ENCODE measurements at regions of chr7 and their contacts with region 1.

Region 1: DNA sequence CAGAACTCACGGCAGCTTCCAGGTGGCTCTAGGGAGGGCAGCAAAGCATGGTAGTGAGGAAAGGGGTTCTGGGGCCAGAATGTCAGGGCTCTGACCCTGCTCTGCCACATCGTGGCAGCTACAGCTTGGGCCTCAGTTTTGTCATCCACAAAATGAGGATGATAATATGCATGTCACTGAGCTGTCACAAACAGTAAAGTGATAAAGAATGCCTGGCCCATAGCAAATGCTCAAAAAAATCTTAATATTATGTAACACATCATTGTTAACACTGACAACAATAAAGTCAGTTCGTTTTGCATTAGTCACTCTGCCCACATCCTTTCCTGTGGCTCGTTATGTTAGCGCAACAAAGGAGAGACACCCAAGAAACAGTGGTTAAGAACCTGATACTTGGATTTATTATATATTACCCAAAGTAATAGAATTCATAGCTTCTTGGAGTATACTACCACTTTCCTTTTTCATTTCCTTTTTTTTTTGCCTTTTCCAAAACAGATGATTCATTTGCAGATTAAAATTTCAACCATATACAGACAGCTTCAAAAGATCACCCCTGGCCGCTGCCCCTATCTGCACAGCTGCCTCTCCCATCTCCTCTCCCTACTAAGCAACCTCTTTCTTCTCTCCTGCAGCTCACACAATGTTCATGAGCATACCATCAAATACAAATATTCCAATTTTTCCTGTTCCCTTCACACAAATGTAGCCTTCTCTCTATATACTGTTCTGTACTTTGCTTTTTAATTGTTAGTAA is 45.5 kb upstream of the DDC start:
- DNase-seq: peak; percentile 88
- ATAC-seq: peak; percentile 97
- H3K4me3 ChIP-seq: no peak overlapping the region
- H3K27ac ChIP-seq: no peak overlapping the region
- H3K4me1 ChIP-seq: peaks cover 15% of the 10 kb centered on the region
- H3K27me3 ChIP-seq: no peaks in the 10 kb centered on the region
- CTCF ChIP-seq: no peak

Region 2: DNA sequence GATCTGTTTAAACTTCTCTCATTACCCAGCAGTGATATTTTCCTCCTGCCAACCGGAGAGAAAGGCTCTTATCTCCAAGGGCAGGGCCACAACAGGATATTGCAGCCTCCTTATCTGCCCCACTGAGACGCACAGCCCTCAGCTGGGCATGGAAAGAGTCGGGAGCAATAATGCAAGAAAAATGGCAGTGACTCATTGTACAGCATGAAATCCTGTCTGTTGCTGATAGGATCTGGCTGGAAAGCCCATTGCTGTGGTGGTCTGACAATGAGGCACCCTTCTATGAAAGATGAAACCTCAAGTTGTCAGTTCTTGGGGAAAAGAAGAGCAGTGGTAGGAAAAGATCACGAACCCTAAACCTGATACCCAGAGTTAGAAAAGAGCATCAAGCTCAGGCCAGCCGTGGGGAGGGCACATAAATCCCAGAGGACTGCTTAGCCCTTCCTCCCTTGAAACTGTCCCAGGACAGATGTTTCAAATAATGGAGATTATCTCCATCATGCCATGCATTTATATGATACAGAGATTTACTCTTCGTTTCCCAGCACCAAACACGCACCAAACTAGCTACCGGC is 113.5 kb before region 1 on chr7:
- CTCF ChIA-PET with region 1: no interaction called
- POLR2A ChIA-PET with region 1: no interaction called
- intact Hi-C with region 1: no loop called
- DNase-seq: no peak
- ATAC-seq: no peak
- H3K4me3 ChIP-seq: no peak overlapping the region
- H3K27ac ChIP-seq: no peak overlapping the region
- H3K4me1 ChIP-seq: no peaks in the 10 kb centered on the region
- H3K27me3 ChIP-seq: peaks cover 15% of the 10 kb centered on the region; the same call in 1 of the 2 replicates
- CTCF ChIP-seq: no peak

Region 3: DNA sequence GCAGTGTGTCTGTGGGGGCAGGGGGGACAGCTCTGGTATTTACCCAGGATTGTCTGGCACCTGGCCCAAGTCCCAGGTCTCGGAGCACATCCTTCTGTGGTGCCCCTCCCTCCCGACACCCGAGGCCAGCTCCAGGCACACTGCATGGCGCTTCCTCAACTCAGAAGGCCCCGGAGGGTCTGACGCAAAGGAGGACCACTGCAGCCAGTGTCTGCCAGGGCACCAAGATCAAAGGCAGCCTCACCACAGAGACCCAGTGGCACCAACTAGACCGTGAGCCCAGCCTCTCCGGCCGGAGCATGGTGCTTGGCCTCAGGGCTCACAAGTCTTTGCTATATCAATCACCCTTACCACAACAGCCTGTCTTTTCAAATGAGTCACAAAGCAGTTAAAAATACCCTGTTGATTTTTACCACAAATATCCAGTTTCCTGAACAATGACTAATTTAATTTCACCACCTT is 53.8 kb after region 1 on chr7:
- CTCF ChIA-PET with region 1: no interaction called
- POLR2A ChIA-PET with region 1: no interaction called
- intact Hi-C with region 1: loop called (anchors 1 kb)
- DNase-seq: peak; percentile 85
- ATAC-seq: peak; percentile 98
- H3K4me3 ChIP-seq: no peak overlapping the region
- H3K27ac ChIP-seq: peak overlapping the region; percentile 83
- H3K4me1 ChIP-seq: peaks cover 23% of the 10 kb centered on the region
- H3K27me3 ChIP-seq: no peaks in the 10 kb centered on the region
- CTCF ChIP-seq: no peak

Region 4: DNA sequence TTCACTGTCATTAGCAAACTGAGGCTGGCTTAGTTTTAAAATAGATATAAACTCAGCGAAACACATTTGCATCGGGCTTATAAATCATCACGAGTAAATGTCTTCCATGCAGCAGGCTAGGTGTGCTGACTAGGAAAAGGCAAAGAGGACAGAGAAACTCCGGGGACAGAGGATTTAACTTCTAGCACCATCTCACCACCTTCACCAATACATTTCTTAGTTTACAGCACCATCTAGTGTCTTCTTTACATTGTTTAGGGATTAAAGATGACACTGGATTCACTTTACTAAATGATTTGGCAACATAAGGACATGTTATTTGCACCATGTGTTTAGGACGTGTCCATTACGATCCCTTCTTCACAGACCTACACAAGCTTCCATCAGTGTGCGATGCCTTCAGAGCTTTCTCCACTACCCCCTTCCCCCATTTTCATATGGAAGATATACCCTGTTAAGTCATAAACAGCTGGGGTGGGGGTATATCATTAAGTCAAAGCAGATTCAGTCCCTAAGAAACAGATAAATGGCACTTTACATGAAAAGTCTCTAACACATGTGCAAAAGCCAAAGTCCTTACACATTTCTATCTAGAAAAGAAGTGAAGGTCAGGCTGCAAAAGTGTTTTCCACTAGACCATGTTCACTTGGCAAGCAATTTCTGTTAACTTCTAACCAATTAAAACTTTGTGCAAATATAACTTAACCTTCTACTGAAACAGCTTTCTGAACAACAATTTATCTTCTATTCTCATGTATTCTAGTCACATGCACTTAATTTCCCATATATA is 68.7 kb after region 1 on chr7:
- CTCF ChIA-PET with region 1: no interaction called
- POLR2A ChIA-PET with region 1: no interaction called
- intact Hi-C with region 1: loop called (anchors 2 kb)
- DNase-seq: peak; percentile 76
- ATAC-seq: peak; percentile 66
- H3K4me3 ChIP-seq: no peak overlapping the region
- H3K27ac ChIP-seq: no peak overlapping the region
- H3K4me1 ChIP-seq: peaks cover 8% of the 10 kb centered on the region
- H3K27me3 ChIP-seq: no peaks in the 10 kb centered on the region
- CTCF ChIP-seq: peak; percentile 63

Measured in PC-3 (cell line).